CD8-positive, alpha-beta memory T cell (primary cell): ENCODE measurements at regions of chrX and their contacts with region 1.

Region 1: DNA sequence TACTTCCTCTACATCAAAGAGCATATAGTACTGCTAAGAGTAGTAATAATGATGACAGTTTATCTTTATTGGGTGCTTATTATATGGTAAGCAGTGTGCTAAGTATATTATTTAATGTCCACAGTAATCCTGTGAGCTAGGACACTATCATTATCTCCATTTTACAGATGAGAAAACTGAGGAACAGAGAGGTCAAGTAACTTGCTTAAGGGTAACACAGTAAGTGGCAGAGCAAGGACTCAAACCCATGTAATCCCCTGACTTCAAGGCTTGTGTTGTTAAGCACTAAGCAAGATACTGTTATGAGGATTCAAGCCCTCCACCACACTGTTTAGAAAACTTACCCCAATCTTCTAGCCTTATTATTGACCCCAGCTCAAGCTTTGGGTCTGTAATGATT is 202.4 kb downstream of the ENOX2 start:
- DNase-seq: no peak
- H3K4me3 ChIP-seq: no peak overlapping the region
- H3K4me3 Mint-ChIP-seq: no peak overlapping the region
- H3K27ac ChIP-seq: no peak overlapping the region
- H3K27ac Mint-ChIP-seq: no peak overlapping the region
- H3K4me1 ChIP-seq: no peaks in the 10 kb centered on the region
- H3K4me1 Mint-ChIP-seq: no peaks in the 10 kb centered on the region
- H3K27me3 ChIP-seq: no peaks in the 10 kb centered on the region
- H3K27me3 Mint-ChIP-seq: no peaks in the 10 kb centered on the region

Region 2: GRCh38 chrX:130625386-130625785 is 75.2 kb before region 1 on chrX:
- CTCF ChIA-PET with region 1: no interaction called
- POLR2A ChIA-PET with region 1: interaction called, 10 read pairs
- DNase-seq: no peak
- H3K4me3 ChIP-seq: no peak overlapping the region
- H3K4me3 Mint-ChIP-seq: no peak overlapping the region
- H3K27ac ChIP-seq: no peak overlapping the region
- H3K27ac Mint-ChIP-seq: no peak overlapping the region
- H3K4me1 ChIP-seq: no peaks in the 10 kb centered on the region
- H3K4me1 Mint-ChIP-seq: no peaks in the 10 kb centered on the region
- H3K27me3 ChIP-seq: no peaks in the 10 kb centered on the region
- H3K27me3 Mint-ChIP-seq: peaks cover 0 to 10% of the 10 kb centered on the region in 2 donors